B cell (primary cell): ENCODE measurements at regions of chr9 and their contacts with region 1.

Region 1: DNA sequence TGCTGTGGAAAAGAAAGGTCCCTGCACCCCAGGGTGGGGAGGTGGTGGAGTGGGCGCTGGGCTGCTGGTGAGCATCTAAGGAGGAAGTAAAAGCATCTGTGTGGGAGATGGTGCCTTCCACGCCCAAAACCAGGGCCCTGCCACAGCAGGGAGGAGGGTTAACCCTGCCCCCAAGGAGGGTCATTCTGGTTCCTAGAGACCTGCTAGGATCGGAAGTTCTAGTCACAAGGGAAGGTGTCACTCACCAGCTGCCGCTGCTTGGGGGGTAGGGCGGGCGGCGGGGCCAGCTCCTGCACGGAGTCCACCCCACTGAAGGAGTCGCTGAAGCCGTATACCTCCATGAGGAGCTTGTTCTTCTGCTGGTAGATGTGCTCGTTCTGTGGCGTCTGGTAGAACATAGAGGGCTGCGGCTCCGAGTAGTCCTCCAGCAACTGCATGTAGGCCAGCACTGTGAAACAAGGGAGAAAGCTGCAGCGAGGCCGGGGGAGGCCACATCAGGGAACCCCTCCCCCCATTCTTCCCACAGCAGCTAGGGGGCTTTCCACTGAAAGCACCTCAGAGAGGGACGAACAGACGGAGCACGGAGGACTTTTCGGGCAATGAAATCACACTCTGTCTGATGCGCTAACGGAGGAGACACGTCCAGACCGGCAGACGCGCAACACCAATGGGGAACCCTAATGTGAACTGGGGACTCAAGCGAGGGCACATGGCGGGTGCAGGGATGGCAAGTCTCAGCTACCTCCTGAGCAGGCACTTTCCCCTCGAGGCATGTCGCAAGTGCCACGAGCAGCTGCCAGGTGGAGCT is 76.4 kb downstream of the PRRT1B start:
- DNase-seq: peak; percentile 75
- ATAC-seq: peak; percentile 84
- H3K4me3 ChIP-seq: peak overlapping the region in 1 of 5 experiments; percentile 18
- H3K4me3 Mint-ChIP-seq: peak overlapping the region; percentile 85
- H3K27ac ChIP-seq: peak overlapping the region; percentile 65 to 81
- H3K27ac Mint-ChIP-seq: peak overlapping the region; percentile 81
- H3K4me1 ChIP-seq: peaks cover 25 to 37% of the 10 kb centered on the region in 2 donors
- H3K4me1 Mint-ChIP-seq: peaks cover 43% of the 10 kb centered on the region
- H3K27me3 ChIP-seq: no peaks in the 10 kb centered on the region
- H3K27me3 Mint-ChIP-seq: no peaks in the 10 kb centered on the region
- CTCF ChIP-seq: no peak

Region 2: DNA sequence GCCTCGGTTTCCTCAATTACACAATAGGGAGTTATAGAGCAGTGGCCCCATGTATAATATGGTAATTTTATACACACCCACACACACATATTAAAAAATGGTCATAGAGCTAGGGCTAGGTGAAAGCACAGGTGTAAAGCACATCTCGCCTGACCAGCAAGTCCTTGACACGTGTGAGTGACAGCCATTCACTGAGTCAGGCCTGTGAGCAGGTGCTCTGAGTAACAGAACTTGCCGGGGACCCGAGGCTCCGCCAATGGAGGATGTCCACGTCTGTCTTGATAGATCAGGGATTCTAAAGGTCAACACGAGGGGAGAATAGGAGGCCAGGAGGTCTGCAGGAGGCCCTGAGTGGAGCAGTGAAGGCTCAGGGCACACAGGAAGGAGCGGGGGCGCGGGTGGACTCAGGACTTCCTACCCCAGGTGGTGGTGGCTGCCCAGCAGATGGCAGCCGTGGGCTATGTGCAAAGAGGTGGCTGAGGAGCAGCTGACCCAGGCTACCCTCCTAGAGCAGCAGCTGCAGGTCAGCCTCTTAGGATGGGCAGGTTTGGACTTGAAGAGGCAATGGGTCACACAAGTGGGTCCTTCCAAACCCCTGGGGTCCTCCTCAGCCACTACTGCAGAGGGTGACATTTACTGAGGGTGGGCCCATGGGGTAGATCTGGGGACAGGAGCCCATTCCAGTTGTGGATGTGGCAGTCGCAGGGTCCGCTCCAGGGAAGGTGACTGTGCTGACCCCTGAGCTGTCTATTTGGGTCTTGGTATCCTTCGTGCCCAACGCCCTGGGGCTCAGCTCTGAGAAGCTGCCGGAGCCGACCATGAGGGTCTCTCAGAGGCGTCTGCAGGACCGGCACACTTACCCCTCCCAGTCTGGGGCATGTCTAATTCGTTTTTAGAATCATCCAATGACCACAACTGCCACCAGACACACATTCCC is 30.6 kb before region 1 on chr9:
- CTCF ChIA-PET with region 1: interaction called, 11 read pairs
- POLR2A ChIA-PET with region 1: no interaction called
- intact Hi-C with region 1: no loop called
- DNase-seq: peak; percentile 85
- ATAC-seq: peak; percentile 87
- H3K4me3 ChIP-seq: no peak overlapping the region
- H3K4me3 Mint-ChIP-seq: no peak overlapping the region
- H3K27ac ChIP-seq: no peak overlapping the region
- H3K27ac Mint-ChIP-seq: peak overlapping the region; percentile 82
- H3K4me1 ChIP-seq: peaks cover 0 to 13% of the 10 kb centered on the region in 2 donors
- H3K4me1 Mint-ChIP-seq: peaks cover 27% of the 10 kb centered on the region
- H3K27me3 ChIP-seq: no peaks in the 10 kb centered on the region
- H3K27me3 Mint-ChIP-seq: no peaks in the 10 kb centered on the region
- CTCF ChIP-seq: peak; percentile 83

Region 3: GRCh38 chr9:131635285-131635684 is 13.5 kb after region 1 on chr9:
- CTCF ChIA-PET with region 1: interaction called, 5 read pairs
- POLR2A ChIA-PET with region 1: interaction called, 9 read pairs
- intact Hi-C with region 1: loop called (anchors 1 kb)
- DNase-seq: peak; percentile 72
- ATAC-seq: peak; percentile 87
- H3K4me3 ChIP-seq: no peak overlapping the region
- H3K4me3 Mint-ChIP-seq: peak overlapping the region; percentile 45
- H3K27ac ChIP-seq: peak overlapping the region in 1 of 2 donors; percentile 79
- H3K27ac Mint-ChIP-seq: peak overlapping the region; percentile 88
- H3K4me1 ChIP-seq: peaks cover 20 to 28% of the 10 kb centered on the region in 2 donors
- H3K4me1 Mint-ChIP-seq: peaks cover 47% of the 10 kb centered on the region
- H3K27me3 ChIP-seq: no peaks in the 10 kb centered on the region
- H3K27me3 Mint-ChIP-seq: no peaks in the 10 kb centered on the region
- CTCF ChIP-seq: no peak